BJ (cell line): ENCODE measurements at regions of chr19 and their contacts with region 1.

Region 1: DNA sequence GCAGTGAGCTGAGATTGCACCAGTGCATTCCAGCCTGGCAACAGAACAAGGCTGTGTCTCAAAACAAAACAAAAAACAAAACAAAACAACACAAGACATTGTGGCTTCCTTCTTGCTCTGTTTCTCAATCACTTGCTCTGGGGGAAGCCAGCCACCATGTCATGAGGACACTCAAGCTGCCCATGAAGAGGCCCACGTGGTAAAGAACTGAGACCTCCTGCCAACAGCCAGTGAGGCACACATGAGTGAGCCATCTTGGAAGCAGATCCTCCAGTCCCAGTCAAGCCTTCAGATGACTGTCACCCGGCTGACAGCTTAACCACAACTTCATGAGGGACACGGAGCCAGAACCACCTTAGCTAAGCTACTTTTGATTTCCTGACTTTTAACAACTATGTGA is 25.2 kb downstream of the CPT1C start:
- DNase-seq: no peak
- H3K4me3 ChIP-seq: no peak overlapping the region
- H3K27me3 ChIP-seq: no peaks in the 10 kb centered on the region
- CTCF ChIP-seq: no peak

Region 2: GRCh38 chr19:49705919-49706318 is 10.2 kb before region 1 on chr19:
- CTCF ChIA-PET with region 1: interaction called, 10 read pairs
- POLR2A ChIA-PET with region 1: no interaction called
- DNase-seq: no peak
- H3K4me3 ChIP-seq: no peak overlapping the region
- H3K27me3 ChIP-seq: no peaks in the 10 kb centered on the region
- CTCF ChIP-seq: no peak